CD4-positive, alpha-beta T cell (primary cell): ENCODE measurements at regions of chr17 and their contacts with region 1.

Region 1: DNA sequence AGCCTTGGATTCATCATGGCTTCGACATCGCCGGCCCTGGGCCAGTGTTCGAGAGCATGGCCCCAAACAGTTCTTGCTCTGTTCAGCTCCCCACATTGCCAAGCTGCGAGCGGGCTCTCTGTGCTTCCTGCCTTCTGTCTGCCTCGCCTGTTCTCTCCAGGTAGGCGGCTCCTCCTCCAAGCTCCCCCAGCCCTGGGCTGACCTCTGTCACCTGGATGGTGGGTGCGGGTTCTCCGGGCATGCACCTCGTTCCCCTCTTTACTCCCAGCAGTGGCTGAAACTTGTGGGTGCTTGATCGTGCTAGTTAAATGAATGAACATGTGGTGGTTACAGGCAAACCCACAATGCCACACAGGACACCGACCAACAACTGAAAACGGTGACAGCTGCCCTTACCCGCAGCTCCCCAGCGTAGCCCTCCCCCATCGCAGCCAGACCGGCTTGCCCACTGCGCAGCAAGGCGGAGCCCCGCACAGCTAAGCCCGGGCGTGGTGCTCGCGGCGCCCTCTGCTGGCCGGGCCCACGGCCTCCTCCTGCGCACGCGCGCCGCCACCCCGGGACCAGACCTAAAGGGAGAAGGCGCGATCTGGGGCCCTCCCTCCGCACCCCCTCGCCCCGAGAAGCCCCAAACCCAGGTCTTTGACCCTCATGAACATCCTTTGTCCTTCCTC is 23.0 kb upstream of the EIF1 start:
- DNase-seq: peak; percentile 75 to 95 (median 88)
- ATAC-seq: peak; percentile 80
- H3K4me3 ChIP-seq: peak overlapping the region; percentile 58
- H3K4me3 Mint-ChIP-seq: peak overlapping the region; percentile 87
- H3K27ac ChIP-seq: peak overlapping the region; percentile 98 to 99
- H3K27ac Mint-ChIP-seq: peak overlapping the region; percentile 90
- H3K4me1 ChIP-seq: peaks cover 42% of the 10 kb centered on the region
- H3K4me1 Mint-ChIP-seq: peaks cover 41% of the 10 kb centered on the region
- H3K27me3 ChIP-seq: no peaks in the 10 kb centered on the region
- H3K27me3 Mint-ChIP-seq: no peaks in the 10 kb centered on the region
- CTCF ChIP-seq: peak; percentile 99

Region 2: DNA sequence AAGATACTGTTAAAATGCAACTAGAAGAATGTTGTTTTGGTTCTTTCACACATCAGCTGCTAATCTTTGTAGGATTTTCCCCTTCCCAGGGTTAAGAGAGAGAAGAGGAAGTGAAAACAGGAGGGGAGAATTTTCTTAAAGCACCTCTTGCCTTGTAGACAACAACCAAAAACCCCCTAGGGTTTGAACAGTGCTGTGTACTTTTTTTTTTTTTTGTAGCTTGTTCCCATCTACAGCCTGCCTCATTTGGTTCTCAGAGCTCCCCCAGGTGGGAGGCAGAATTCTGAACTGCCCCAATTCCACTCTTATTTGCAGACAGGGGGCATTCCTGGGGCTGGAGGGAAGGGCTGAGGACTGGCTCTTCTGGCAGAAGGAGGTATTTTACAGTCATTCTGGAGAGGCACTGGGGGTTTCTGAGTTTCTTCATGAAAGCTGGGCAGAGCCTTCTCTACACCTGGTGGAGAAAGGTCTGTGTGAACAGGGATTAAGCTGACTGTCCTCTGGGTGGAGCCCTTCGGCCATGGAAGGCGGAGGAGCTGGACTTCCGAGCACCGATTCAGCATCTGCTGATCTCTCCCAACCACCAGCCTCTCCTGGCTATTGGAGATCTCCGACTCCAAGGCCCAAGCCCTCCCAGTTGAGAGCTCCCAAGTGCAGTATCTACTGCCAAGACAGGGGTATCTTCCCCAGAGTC is 1050.3 kb before region 1 on chr17:
- CTCF ChIA-PET with region 1: interaction called, 7 read pairs
- POLR2A ChIA-PET with region 1: no interaction called
- intact Hi-C with region 1: loop called in 1 of 2 experiments (anchors 5 kb)
- DNase-seq: peak in 9 of 14 experiments; percentile 44 to 89 (median 55)
- ATAC-seq: peak; percentile 35
- H3K4me3 ChIP-seq: no peak overlapping the region
- H3K4me3 Mint-ChIP-seq: peak overlapping the region; percentile 75
- H3K27ac ChIP-seq: peak overlapping the region; percentile 96 to 99
- H3K27ac Mint-ChIP-seq: peak overlapping the region; percentile 98
- H3K4me1 ChIP-seq: peaks cover 83% of the 10 kb centered on the region
- H3K4me1 Mint-ChIP-seq: peaks cover 72% of the 10 kb centered on the region
- H3K27me3 ChIP-seq: no peaks in the 10 kb centered on the region
- H3K27me3 Mint-ChIP-seq: no peaks in the 10 kb centered on the region
- CTCF ChIP-seq: peak; percentile 67

Region 3: GRCh38 chr17:40854159-40854814 is 811.4 kb before region 1 on chr17:
- CTCF ChIA-PET with region 1: interaction called, 44 read pairs
- POLR2A ChIA-PET with region 1: interaction called, 15 read pairs
- intact Hi-C with region 1: loop called (anchors 1 kb)
- DNase-seq: peak in 1 of 14 experiments; percentile 3
- ATAC-seq: no peak
- H3K4me3 ChIP-seq: no peak overlapping the region
- H3K4me3 Mint-ChIP-seq: no peak overlapping the region
- H3K27ac ChIP-seq: no peak overlapping the region
- H3K27ac Mint-ChIP-seq: no peak overlapping the region
- H3K4me1 ChIP-seq: no peaks in the 10 kb centered on the region
- H3K4me1 Mint-ChIP-seq: peaks cover 4% of the 10 kb centered on the region
- H3K27me3 ChIP-seq: peaks cover 0 to 22% of the 10 kb centered on the region in 2 experiments
- H3K27me3 Mint-ChIP-seq: peaks cover 34% of the 10 kb centered on the region
- CTCF ChIP-seq: no peak

Region 4: DNA sequence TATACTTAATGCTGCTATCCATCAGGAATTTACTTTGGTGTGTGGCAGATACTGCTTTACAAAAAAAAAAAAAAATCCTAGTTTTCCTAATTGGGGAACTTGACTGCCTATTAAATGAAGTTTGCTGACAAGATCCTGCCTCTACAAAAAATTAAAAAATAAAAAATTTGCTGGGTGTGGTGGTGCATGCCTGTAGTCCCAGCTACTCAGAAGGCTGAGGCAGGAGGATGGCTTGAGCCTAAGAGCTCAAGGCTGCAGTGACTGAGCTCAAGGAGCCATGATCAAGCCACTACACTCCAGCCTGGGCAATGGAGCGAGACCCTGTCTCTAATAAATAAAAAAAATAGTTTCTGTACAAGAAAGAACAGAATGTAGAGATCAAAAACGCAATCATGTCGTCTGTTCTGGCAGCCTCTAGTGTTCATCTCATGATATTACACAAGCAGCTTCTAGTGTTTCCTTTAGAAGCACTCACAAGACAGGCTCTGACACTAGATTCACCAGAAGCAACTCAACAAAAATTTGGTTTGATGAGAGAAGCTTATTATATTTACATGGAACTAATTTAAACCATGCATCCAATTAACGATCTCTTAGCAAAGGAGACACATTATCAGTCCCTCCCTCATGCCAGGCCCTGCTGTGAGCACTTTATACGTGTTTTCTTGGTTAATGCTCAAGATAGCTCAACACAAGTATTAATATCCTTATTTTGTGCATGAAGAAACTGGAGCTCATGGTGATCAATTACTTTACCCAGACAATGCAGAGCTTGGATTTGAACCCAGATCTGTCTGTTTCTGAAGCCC is 343.4 kb before region 1 on chr17:
- CTCF ChIA-PET with region 1: interaction called, 3 read pairs
- POLR2A ChIA-PET with region 1: no interaction called
- intact Hi-C with region 1: loop called (anchors 5 kb)
- DNase-seq: peak in 4 of 14 experiments; percentile 33 to 75 (median 70)
- ATAC-seq: peak; percentile 87
- H3K4me3 ChIP-seq: no peak overlapping the region
- H3K4me3 Mint-ChIP-seq: peak overlapping the region; percentile 23
- H3K27ac ChIP-seq: no peak overlapping the region
- H3K27ac Mint-ChIP-seq: peak overlapping the region; percentile 89
- H3K4me1 ChIP-seq: peaks cover 54% of the 10 kb centered on the region
- H3K4me1 Mint-ChIP-seq: peaks cover 59% of the 10 kb centered on the region
- H3K27me3 ChIP-seq: no peaks in the 10 kb centered on the region
- H3K27me3 Mint-ChIP-seq: no peaks in the 10 kb centered on the region
- CTCF ChIP-seq: peak; percentile 88

Region 5: DNA sequence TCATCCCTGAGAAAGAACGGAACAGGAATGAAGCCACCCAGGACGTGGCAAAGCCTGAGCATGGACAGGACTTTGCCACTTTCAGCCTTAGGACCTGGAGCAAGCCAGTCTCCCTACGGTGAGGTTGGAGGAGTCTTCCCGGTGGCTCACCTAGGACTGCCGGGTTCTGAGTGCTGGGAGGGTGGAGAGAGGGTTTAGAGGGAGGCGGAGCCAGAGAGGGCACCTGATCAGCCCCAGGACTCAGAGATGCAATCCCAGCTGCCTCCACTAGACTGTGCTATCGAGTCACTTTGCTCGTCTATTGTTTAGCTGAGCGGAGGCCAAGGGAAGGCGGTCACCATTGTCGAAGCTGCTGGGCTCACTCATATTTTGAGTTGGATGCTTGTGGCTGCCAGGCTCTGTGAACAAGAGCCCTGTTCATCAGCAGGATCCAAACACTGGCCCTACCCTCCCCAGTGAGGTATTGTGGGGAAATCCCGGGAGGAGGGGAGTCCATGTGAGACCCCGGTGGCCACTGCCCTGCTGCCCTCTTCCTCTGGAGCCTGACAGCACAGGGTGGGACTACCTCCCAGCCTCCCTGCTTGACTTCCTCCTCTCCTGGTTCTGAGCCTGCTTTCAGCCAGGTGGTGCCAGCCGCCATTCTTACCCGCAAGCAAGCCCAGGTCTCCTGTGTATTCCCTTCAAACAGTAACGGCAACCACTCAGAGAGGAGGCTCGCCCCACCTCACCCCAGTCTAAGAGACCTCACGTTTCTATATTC is 86.0 kb before region 1 on chr17:
- CTCF ChIA-PET with region 1: no interaction called
- POLR2A ChIA-PET with region 1: no interaction called
- intact Hi-C with region 1: no loop called
- DNase-seq: peak; percentile 23 to 78 (median 47)
- ATAC-seq: peak; percentile 98
- H3K4me3 ChIP-seq: no peak overlapping the region
- H3K4me3 Mint-ChIP-seq: no peak overlapping the region
- H3K27ac ChIP-seq: no peak overlapping the region
- H3K27ac Mint-ChIP-seq: no peak overlapping the region
- H3K4me1 ChIP-seq: no peaks in the 10 kb centered on the region
- H3K4me1 Mint-ChIP-seq: no peaks in the 10 kb centered on the region
- H3K27me3 ChIP-seq: peaks cover 7 to 22% of the 10 kb centered on the region in 2 experiments
- H3K27me3 Mint-ChIP-seq: peaks cover 67% of the 10 kb centered on the region
- CTCF ChIP-seq: no peak

Region 6: GRCh38 chr17:41654133-41654907 is 11.4 kb before region 1 on chr17:
- CTCF ChIA-PET with region 1: interaction called, 110 read pairs
- POLR2A ChIA-PET with region 1: interaction called, 35 read pairs
- intact Hi-C with region 1: no loop called
- DNase-seq: no peak
- ATAC-seq: no peak
- H3K4me3 ChIP-seq: no peak overlapping the region
- H3K4me3 Mint-ChIP-seq: no peak overlapping the region
- H3K27ac ChIP-seq: no peak overlapping the region
- H3K27ac Mint-ChIP-seq: no peak overlapping the region
- H3K4me1 ChIP-seq: no peaks in the 10 kb centered on the region
- H3K4me1 Mint-ChIP-seq: no peaks in the 10 kb centered on the region
- H3K27me3 ChIP-seq: no peaks in the 10 kb centered on the region
- H3K27me3 Mint-ChIP-seq: no peaks in the 10 kb centered on the region
- CTCF ChIP-seq: no peak

Region 7: DNA sequence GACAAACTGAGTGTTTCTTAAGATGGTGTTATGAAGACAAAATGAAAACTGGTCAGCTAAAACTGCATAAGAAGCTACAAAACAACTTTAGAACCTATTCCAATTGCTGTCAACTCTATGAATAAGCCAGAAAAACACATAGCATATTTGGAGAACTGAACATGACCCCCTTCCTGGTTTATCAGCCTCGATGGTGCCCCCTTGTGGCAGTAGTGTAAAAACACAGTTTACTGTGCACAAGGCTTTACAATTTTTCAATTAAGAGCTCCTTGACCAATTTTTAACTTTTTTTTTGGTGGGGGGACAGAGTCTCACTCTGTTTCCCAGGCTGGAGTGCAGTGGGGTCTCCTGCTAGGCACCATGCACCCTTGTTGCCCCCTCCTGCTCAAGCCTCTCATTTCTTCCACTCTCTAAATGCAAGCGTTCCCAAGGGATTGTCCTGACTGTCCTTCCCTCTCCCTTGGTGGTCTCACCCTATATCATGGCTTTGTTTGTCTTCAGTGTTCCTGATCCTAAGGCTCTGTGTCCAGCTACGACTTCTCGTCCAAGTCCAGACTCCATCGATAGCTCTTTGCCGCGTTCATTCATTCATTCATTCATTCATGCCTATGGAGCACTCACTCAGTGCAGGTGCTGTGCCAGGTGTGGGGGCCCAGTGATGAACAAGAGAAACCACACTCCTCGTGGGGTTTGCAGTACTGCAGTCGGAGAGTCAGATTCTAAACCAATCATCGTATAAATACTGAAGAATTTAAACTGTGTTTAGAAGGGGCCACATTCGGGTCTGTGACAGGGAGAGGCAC is 30.5 kb after region 1 on chr17:
- CTCF ChIA-PET with region 1: interaction called, 61 read pairs
- POLR2A ChIA-PET with region 1: interaction called, 181 read pairs
- intact Hi-C with region 1: no loop called
- DNase-seq: peak; percentile 52 to 88 (median 74)
- ATAC-seq: peak; percentile 55
- H3K4me3 ChIP-seq: no peak overlapping the region
- H3K4me3 Mint-ChIP-seq: peak overlapping the region; percentile 51
- H3K27ac ChIP-seq: no peak overlapping the region
- H3K27ac Mint-ChIP-seq: peak overlapping the region; percentile 73
- H3K4me1 ChIP-seq: peaks cover 6% of the 10 kb centered on the region
- H3K4me1 Mint-ChIP-seq: peaks cover 32% of the 10 kb centered on the region
- H3K27me3 ChIP-seq: no peaks in the 10 kb centered on the region
- H3K27me3 Mint-ChIP-seq: peaks cover 3% of the 10 kb centered on the region
- CTCF ChIP-seq: peak; percentile 86